Activated CD4-positive, alpha-beta memory T cell treated with anti-CD3 and anti-CD28 coated beads for 36 hours (primary cell): ENCODE measurements at regions of chr22 and their contacts with region 1.

Region 1: GRCh38 chr22:31107178-31107893 is at the start of gene SELENOM:
- DNase-seq: peak; percentile 94
- H3K4me3 Mint-ChIP-seq: peak within 1 kb of the TSS; percentile 80
- H3K27ac Mint-ChIP-seq: peak within 1 kb of the TSS; percentile 70
- H3K4me1 Mint-ChIP-seq: peaks cover 22% of the 10 kb centered on the region
- H3K27me3 Mint-ChIP-seq: no peaks in the 10 kb centered on the region
- total RNA-seq, gene SELENOM: 14.1 to 14.3 TPM

Region 2: GRCh38 chr22:30968924-30969539 is 138.3 kb before region 1 on chr22 and contains the start of gene TUG1:
- CTCF ChIA-PET with region 1: interaction called, 21 read pairs
- POLR2A ChIA-PET with region 1: interaction called, 5 read pairs
- intact Hi-C with region 1: no loop called
- DNase-seq: peak; percentile 98
- H3K4me3 Mint-ChIP-seq: peak within 1 kb of the TSS; percentile 85
- H3K27ac Mint-ChIP-seq: peak within 1 kb of the TSS; percentile 89
- H3K4me1 Mint-ChIP-seq: peaks cover 64% of the 10 kb centered on the region
- H3K27me3 Mint-ChIP-seq: peaks cover 1% of the 10 kb centered on the region
- total RNA-seq, gene TUG1: 35.6 to 38.3 TPM

Region 3: GRCh38 chr22:31096657-31097279 is 10.6 kb before region 1 on chr22:
- CTCF ChIA-PET with region 1: interaction called, 17 read pairs
- POLR2A ChIA-PET with region 1: no interaction called
- intact Hi-C with region 1: no loop called
- DNase-seq: no peak
- H3K4me3 Mint-ChIP-seq: no peak overlapping the region
- H3K27ac Mint-ChIP-seq: no peak overlapping the region
- H3K4me1 Mint-ChIP-seq: no peaks in the 10 kb centered on the region
- H3K27me3 Mint-ChIP-seq: no peaks in the 10 kb centered on the region

Region 4: DNA sequence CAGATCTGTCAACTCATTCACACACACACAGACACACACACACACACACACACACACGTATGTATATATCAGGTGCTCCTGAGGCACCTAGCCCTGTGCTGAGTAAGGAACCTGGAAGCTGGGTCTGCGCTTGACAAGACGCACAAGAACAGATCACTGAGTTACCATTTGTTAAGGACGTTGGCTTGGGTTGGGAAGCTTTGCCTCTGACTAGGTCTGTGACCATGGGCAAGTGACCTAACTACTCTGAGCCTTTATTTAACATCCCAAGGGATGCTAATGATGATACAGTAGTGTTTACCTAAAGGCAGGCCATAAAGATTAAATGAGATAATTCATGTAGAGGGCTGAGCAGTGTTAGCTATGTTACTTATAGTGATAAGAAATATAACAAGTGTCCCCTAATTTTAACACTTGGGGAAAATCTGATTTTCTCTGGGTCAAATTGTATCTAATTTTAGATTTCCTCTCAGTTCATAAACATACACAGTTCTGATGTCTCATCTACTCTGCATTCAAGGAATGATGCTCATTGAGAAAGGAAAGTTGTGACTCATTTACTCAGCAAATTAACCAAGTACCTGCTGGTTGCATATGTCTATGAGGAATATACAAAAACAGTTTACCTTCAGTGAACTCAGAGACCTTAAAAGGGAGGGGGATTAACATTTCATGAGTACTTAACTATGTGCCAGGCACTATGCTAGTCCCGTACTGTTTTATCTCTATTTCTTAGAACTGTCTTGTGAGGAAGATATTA is 66.2 kb after region 1 on chr22:
- CTCF ChIA-PET with region 1: no interaction called
- POLR2A ChIA-PET with region 1: interaction called, 3 read pairs
- intact Hi-C with region 1: loop called (anchors 5 kb)
- DNase-seq: peak; percentile 13
- H3K4me3 Mint-ChIP-seq: peak overlapping the region; percentile 17
- H3K27ac Mint-ChIP-seq: peak overlapping the region; percentile 88
- H3K4me1 Mint-ChIP-seq: peaks cover 28% of the 10 kb centered on the region
- H3K27me3 Mint-ChIP-seq: no peaks in the 10 kb centered on the region

Region 5: GRCh38 chr22:31313366-31314147 is 206.2 kb after region 1 on chr22:
- CTCF ChIA-PET with region 1: interaction called, 23 read pairs
- POLR2A ChIA-PET with region 1: no interaction called
- intact Hi-C with region 1: no loop called
- DNase-seq: peak; percentile 79
- H3K4me3 Mint-ChIP-seq: no peak overlapping the region
- H3K27ac Mint-ChIP-seq: no peak overlapping the region
- H3K4me1 Mint-ChIP-seq: peaks cover 23% of the 10 kb centered on the region
- H3K27me3 Mint-ChIP-seq: no peaks in the 10 kb centered on the region